A673 (cell line): ENCODE measurements at regions of chr16 and their contacts with region 1.

Region 1: GRCh38 chr16:71383054-71383773 is 24.7 kb downstream of the CALB2 start:
- DNase-seq: no peak
- H3K4me3 ChIP-seq: no peak overlapping the region
- H3K27ac ChIP-seq: no peak overlapping the region
- H3K4me1 ChIP-seq: no peaks in the 10 kb centered on the region
- H3K27me3 ChIP-seq: peaks cover 78% of the 10 kb centered on the region
- CTCF ChIP-seq: no peak

Region 2: DNA sequence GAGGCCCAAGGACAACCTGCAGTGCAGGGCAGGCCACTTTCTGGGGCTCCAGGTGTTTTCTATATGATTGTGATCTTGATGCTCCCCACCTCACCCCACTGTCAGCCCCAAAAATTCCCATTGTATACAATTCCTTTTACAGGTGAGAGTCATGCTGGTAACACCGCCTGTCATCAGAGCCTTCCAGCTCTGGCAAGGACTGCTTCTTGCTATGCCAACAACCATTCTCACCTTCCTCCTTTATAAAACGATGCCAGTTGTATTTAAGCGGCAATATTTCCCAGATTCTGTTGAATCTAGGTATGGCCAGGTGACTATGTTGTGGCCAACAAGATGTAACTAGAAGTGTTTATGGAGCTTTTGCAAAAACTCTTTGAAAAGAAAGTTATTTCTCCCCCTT is 55.1 kb before region 1 on chr16:
- CTCF ChIA-PET with region 1: no interaction called
- POLR2A ChIA-PET with region 1: no interaction called
- intact Hi-C with region 1: loop called (anchors 10 kb)
- DNase-seq: no peak
- H3K4me3 ChIP-seq: no peak overlapping the region
- H3K27ac ChIP-seq: no peak overlapping the region
- H3K4me1 ChIP-seq: no peaks in the 10 kb centered on the region
- H3K27me3 ChIP-seq: peaks cover 3% of the 10 kb centered on the region
- CTCF ChIP-seq: no peak

Region 3: GRCh38 chr16:71402007-71402406 is 18.8 kb after region 1 on chr16:
- CTCF ChIA-PET with region 1: no interaction called
- POLR2A ChIA-PET with region 1: interaction called, 10 read pairs
- intact Hi-C with region 1: no loop called
- DNase-seq: no peak
- H3K4me3 ChIP-seq: no peak overlapping the region
- H3K27ac ChIP-seq: no peak overlapping the region
- H3K4me1 ChIP-seq: no peaks in the 10 kb centered on the region
- H3K27me3 ChIP-seq: peaks cover 64% of the 10 kb centered on the region
- CTCF ChIP-seq: no peak

Region 4: DNA sequence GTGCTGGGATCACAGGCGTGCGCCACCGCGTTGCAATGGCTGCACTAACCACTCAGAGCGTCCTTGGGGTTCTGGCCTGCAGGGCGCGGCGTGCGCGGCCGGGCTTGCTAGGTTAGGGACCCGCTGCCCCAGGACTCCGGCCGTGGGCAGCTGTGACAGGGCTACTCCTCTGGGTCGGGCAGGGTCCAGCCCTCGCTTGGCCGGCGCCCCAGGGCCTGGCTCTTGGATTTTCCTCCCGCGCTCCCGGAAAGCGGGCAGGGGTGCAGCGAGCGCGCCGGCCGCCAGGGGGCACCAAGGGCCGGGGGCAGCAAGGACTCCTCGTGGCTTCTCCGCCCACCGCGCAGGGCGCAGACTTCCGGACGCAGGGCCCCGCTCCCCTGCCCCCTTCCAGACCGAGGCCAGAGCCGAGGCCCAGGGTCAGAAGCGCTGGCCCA is 58.2 kb after region 1 on chr16:
- CTCF ChIA-PET with region 1: no interaction called
- POLR2A ChIA-PET with region 1: no interaction called
- intact Hi-C with region 1: loop called (anchors 10 kb)
- DNase-seq: peak; percentile 10
- H3K4me3 ChIP-seq: no peak overlapping the region
- H3K27ac ChIP-seq: no peak overlapping the region
- H3K4me1 ChIP-seq: no peaks in the 10 kb centered on the region
- H3K27me3 ChIP-seq: peaks cover 7% of the 10 kb centered on the region
- CTCF ChIP-seq: peak; percentile 39; the same call in 1 of the 2 replicates

Region 5: GRCh38 chr16:71626018-71626857 is 243.0 kb after region 1 on chr16 and contains the start of gene MARVELD3:
- CTCF ChIA-PET with region 1: no interaction called
- POLR2A ChIA-PET with region 1: no interaction called
- intact Hi-C with region 1: no loop called
- DNase-seq: no peak
- H3K4me3 ChIP-seq: peak within 1 kb of the TSS; percentile 62
- H3K27ac ChIP-seq: no peak within 1 kb of the TSS
- H3K4me1 ChIP-seq: peaks cover 17% of the 10 kb centered on the region
- H3K27me3 ChIP-seq: no peaks in the 10 kb centered on the region
- CTCF ChIP-seq: no peak
- total RNA-seq, gene MARVELD3: 1.4 and 1.5 TPM in 2 replicates